Mucosa of descending colon (tissue), 3 donors: ENCODE measurements at regions of chr11 and their contacts with region 1.

Region 1: DNA sequence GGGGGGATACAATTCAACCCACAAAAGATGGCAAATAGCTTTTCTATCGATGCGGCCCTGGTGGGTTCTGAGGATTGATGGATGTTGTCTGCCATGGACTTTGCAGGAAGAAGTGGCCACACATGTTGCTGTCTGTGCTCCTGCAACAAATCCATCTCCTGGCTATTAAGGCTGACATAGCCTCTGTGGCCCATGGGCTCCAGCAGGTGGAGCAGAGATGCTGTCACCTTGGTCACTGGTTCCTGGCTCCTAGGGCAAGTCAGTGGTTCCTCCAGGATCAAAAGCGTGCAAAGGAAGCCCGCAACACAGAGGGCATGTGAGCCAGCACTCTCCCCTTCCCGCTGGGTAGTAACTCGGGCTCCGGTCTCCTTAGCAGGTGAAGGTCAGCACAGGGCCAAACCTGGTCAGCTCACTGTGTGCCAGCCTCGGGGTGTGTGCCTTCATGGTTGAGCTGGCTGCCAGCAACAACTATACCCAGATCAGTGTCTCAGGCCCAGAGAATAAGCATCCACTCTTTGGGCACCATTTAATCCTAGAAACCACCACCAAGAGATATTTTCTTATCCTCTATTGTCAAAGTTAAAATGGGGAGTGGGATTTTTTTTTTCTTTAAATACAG is 16.2 kb upstream of the CCDC86 start:
- DNase-seq: no peak
- ATAC-seq: no peak
- H3K4me3 ChIP-seq: no peak overlapping the region
- H3K4me1 ChIP-seq: no peaks in the 10 kb centered on the region
- CTCF ChIP-seq: no peak

Region 2: GRCh38 chr11:60878245-60879101 is 52.8 kb after region 1 on chr11:
- intact Hi-C with region 1: no loop called
- DNase-seq: peak in 1 of 3 donors; percentile 2
- ATAC-seq: no peak
- H3K4me3 ChIP-seq: no peak overlapping the region
- H3K4me1 ChIP-seq: no peaks in the 10 kb centered on the region
- CTCF ChIP-seq: no peak

Region 3: GRCh38 chr11:60899046-60899936 is 73.6 kb after region 1 on chr11:
- intact Hi-C with region 1: loop called in 1 of 2 experiments (anchors 5 kb)
- DNase-seq: peak in 1 of 3 donors; percentile 75
- ATAC-seq: peak; percentile 82
- H3K4me3 ChIP-seq: no peak overlapping the region
- H3K4me1 ChIP-seq: peaks cover 6% of the 10 kb centered on the region
- CTCF ChIP-seq: peak; percentile 88